Activated CD4-positive, alpha-beta memory T cell treated with anti-CD3 and anti-CD28 coated beads for 36 hours (primary cell): ENCODE measurements at regions of chr11 and their contacts with region 1.

Region 1: DNA sequence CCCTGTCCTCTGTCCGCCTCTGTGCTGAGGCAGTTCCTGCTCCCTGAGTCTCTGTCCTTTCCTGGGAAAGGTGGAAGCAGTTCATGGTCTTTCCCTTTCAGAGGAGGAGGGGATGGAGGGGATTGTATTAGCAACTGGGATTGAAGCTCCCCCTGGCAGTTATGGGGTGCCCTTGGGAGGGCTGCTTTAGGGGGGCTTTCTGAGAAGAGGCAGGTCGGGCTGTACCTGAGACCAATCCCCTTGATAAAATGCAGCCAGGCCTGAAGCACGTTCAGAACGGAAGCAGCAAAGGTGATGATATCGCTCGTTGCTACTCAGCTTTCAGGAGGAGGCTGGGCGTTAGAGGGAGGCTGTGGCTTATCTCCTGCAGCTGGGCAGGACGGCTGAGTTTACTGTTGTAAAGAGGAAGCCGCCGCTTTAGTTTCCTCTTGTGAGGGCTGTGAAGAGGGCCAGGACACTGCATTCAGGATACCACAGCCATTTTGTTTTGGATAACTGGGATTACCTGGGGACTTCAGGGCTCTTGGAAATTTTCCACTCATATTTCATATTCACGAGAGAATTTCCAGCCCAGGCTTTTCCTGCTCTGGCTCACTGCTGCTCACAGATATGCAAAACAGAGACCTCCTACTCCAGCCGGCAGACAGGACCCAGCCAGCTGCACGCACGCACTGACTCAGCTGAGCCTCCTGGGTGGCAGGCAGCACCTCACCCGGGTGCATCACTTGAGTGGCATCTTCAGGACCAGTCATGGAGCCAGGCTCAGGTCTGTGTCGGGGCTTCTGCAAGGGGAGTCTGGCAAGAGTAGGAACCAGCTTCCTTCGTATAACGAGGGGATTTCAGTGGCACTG is 798 bp downstream of the AMPD3 start:
- DNase-seq: peak; percentile 89
- H3K4me3 Mint-ChIP-seq: peak overlapping the region; percentile 79
- H3K27ac Mint-ChIP-seq: peak overlapping the region; percentile 93
- H3K4me1 Mint-ChIP-seq: peaks cover 83% of the 10 kb centered on the region
- H3K27me3 Mint-ChIP-seq: no peaks in the 10 kb centered on the region

Region 2: DNA sequence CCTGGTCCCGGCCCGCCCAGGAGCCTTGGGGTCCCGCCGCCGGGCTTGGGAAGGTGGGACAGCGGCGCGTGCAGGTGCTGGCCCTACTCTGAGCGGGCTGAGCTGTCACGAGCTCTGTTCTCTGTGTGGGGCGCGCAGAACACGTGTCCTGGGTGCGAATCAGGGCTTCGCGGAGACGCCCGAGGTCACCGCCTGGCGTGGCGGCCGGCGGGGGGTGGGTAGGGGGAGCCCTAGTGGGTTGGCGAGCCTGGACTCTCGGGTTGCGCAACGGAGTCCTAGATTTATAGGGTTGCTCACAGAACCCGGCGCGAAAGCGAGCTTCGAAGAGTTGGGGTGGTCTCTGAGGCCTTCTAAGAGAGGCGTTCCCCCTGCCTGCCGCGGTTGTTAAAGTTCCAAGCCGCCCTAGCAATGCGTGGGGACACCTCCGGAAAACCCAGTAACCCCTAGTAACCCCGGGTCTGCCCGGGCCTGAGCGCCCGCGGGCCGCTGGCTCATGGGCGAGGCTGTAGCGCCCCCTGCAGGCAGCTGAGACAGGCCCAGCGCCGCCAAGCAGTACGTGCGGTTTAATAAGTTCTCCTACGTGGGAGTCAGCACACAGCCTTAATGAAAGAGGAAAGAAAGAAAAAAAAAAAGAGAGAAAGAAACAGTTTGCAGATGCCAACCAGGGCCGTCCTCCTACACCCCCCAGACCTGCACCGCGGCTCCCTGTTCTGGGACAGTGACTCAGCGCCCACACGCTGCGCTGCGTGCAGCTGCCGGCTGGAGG is 148.2 kb before region 1 on chr11:
- CTCF ChIA-PET with region 1: no interaction called
- POLR2A ChIA-PET with region 1: no interaction called
- intact Hi-C with region 1: loop called (anchors 5 kb)
- DNase-seq: peak; percentile 90
- H3K4me3 Mint-ChIP-seq: peak overlapping the region; percentile 89
- H3K27ac Mint-ChIP-seq: peak overlapping the region; percentile 71
- H3K4me1 Mint-ChIP-seq: peaks cover 38% of the 10 kb centered on the region
- H3K27me3 Mint-ChIP-seq: peaks cover 42% of the 10 kb centered on the region

Region 3: DNA sequence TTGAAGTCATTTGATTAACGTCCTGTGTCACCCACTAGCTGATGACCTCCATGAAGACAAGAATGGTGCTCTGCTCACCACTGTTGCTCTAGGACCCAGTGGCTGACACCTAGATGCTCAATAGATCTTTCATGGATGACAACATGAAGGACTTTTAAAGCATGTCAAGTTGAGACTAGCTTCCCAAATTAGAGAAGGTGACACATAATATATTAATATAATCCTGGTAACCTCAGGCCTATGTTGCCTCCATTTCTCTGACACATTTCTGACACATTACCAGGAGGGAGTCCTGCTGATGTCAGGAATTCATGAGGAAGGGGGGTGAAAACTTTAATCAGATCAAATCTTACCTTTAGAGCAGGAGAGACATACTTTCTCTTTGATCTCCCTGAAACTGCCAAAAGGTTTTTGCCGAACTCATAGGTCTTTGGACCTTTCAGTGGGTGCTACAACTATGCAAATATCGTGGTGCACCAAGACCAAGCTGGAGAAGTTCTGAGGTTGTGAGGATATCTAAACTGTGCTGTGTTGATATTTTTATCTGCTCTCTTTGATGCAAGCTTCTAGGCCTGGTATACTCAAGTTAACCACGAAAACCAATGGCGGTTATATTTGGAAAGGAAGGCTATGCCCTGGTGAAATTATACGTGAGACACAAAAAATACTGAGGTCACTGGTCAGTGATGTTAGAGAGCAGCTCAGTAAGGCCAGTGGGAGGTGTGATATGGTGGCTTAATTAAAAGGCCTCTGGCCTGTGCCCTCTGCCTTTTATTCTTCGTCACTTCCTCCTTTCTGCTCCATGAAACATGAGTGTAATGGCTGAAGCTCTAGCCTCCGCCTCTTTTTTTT is 14.0 kb before region 1 on chr11:
- CTCF ChIA-PET with region 1: interaction called, 4 read pairs
- POLR2A ChIA-PET with region 1: interaction called, 20 read pairs
- intact Hi-C with region 1: loop called (anchors 2 kb)
- DNase-seq: peak; percentile 51
- H3K4me3 Mint-ChIP-seq: no peak overlapping the region
- H3K27ac Mint-ChIP-seq: peak overlapping the region; percentile 69
- H3K4me1 Mint-ChIP-seq: peaks cover 25% of the 10 kb centered on the region
- H3K27me3 Mint-ChIP-seq: no peaks in the 10 kb centered on the region

Region 4: DNA sequence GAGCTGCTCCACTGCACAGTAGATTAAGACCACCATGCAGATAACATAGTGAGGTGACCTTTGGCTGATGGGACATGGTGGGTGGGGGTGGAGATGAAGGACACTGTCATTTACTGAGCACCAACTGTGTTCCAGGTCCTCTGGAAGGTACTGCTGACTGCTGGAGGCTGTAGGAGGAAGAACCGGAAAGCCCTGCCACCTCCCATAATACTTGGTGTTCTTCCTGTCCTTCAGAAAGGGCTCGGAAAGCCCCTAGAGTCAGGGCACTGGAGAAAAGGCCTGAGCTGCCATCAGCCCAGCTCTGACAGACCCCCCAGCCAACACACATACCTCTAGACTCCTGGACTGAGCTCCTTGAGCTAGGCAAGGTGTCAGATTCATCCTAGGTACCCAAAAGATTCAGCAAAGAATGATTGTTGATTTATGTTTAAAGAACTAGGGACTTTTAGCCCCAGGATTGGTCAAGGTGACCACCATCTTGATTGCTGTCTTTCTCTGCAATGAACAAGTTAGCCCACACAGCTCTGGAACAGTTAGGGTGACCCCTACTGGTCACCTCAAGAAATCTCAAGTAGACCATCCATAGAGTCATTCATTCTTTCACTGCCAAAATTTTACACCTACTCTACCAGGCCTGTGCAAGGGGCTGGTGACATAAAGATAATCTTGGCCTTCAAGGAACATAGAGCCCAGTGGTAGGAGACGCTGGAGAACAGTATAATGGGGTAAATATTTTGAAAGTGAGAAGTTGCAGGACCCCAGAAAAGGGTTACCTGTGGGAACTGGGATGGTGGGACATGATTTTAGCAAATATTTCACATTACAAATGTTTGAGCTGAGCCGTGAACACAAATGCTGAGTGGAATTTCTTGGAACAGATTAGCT is 198.3 kb after region 1 on chr11:
- CTCF ChIA-PET with region 1: interaction called, 5 read pairs
- POLR2A ChIA-PET with region 1: no interaction called
- intact Hi-C with region 1: loop called (anchors 5 kb)
- DNase-seq: peak; percentile 50
- H3K4me3 Mint-ChIP-seq: no peak overlapping the region
- H3K27ac Mint-ChIP-seq: no peak overlapping the region
- H3K4me1 Mint-ChIP-seq: peaks cover 14% of the 10 kb centered on the region
- H3K27me3 Mint-ChIP-seq: no peaks in the 10 kb centered on the region

Region 5: DNA sequence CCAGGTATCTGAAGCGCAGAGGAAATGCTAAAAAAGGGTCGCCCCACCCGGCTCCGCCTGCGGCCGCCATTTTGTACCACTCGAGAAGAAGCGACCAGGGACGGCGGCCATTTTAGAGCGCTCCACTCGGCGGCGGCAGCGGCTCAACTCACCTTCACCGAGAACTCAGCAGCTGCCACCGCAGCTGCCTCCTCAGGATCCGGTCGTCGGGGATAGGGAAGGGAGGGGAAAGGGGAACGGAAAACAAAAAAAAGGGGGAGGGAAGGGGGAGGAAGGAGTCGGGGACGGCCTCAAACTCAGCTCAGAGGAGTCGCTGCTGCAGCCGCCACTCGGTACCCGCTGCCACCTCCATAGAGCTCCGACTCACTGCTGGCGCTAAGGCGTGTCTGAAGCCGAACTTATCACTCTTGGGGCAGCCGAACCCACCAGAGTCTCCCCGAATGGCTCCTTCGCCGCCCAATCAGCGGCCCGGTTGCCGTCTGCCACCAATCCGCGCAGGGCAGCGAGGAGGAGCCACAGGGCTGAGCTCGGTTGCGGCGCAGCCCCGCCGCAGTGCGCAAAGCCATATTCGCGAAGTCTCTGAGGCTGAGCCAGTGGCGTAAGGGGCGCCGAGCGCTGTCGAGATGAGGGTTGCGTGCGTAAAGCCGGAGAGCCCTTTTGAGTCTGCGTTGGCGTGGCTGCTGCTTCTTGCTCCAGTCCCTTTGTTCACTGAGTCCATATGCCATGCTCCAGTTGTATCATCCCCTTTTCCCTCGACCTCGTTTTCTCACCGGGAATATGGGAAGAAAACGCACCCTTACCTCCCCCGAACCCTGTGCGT is 352.9 kb after region 1 on chr11 and contains the start of gene EIF4G2:
- CTCF ChIA-PET with region 1: no interaction called
- POLR2A ChIA-PET with region 1: interaction called, 9 read pairs
- intact Hi-C with region 1: loop called (anchors 2 kb)
- DNase-seq: peak; percentile 99
- H3K4me3 Mint-ChIP-seq: peak within 1 kb of the TSS; percentile 91
- H3K27ac Mint-ChIP-seq: peak within 1 kb of the TSS; percentile 98
- H3K4me1 Mint-ChIP-seq: peaks cover 46% of the 10 kb centered on the region
- H3K27me3 Mint-ChIP-seq: no peaks in the 10 kb centered on the region
- total RNA-seq, gene EIF4G2: 794 to 835 TPM